ENCODE measurements at regions of chr19 and their contacts with region 1.

Region 1: GRCh38 chr19:49056010-49056901 is 1.3 kb downstream of the CGB7 start:
- DNase-seq: peak; percentile 74
- ATAC-seq: peak; percentile 84
- H3K4me3 ChIP-seq: peak overlapping the region in 4 of 5 experiments; percentile 51 to 77 (median 56)
- H3K4me3 Mint-ChIP-seq: peak overlapping the region; percentile 90
- H3K27ac ChIP-seq: no peak overlapping the region
- H3K27ac Mint-ChIP-seq: no peak overlapping the region
- H3K4me1 ChIP-seq: peaks cover 17 to 28% of the 10 kb centered on the region in 2 donors
- H3K4me1 Mint-ChIP-seq: peaks cover 22% of the 10 kb centered on the region
- H3K27me3 ChIP-seq: peaks cover 0 to 49% (median 20%) of the 10 kb centered on the region in 4 experiments
- H3K27me3 Mint-ChIP-seq: peaks cover 28% of the 10 kb centered on the region
- CTCF ChIP-seq: peak; percentile 46

Region 2: DNA sequence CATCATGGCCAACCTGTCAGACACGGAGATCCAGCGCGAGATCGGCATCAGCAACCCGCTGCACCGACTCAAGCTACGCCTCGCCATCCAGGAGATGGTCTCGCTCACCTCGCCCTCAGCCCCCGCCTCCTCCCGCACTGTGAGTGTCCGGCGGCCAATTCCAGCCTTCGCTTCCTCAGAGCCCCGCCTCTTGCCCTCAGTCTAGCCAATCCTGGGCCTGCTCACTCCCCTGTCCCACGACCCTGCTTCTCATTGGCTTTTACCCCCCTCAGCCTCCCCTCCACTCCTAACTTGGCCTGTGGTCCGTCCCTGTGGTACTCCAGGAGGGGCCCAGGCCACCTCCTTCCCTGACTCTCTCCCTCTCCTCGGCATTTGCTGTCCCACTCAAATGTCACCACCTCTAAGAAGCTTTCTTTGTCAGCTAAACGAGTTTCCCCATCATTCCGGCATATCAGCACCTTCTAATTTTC is 86.6 kb after region 1 on chr19:
- CTCF ChIA-PET with region 1: no interaction called
- POLR2A ChIA-PET with region 1: interaction called, 18 read pairs
- intact Hi-C with region 1: no loop called
- DNase-seq: peak; percentile 64
- ATAC-seq: peak; percentile 83
- H3K4me3 ChIP-seq: peak overlapping the region in 4 of 5 experiments; percentile 2 to 33 (median 14)
- H3K4me3 Mint-ChIP-seq: peak overlapping the region; percentile 80
- H3K27ac ChIP-seq: no peak overlapping the region
- H3K27ac Mint-ChIP-seq: peak overlapping the region; percentile 32
- H3K4me1 ChIP-seq: peaks cover 15 to 17% of the 10 kb centered on the region in 2 donors
- H3K4me1 Mint-ChIP-seq: peaks cover 12% of the 10 kb centered on the region
- H3K27me3 ChIP-seq: peaks cover 0 to 46% (median 14%) of the 10 kb centered on the region in 4 experiments
- H3K27me3 Mint-ChIP-seq: peaks cover 38% of the 10 kb centered on the region
- CTCF ChIP-seq: no peak